K562 (cell line): ENCODE measurements at regions of chr10 and their contacts with region 1.

Region 1: GRCh38 chr10:125054669-125055268 is 105.6 kb downstream of the CTBP2 start:
- DNase-seq: peak in 3 of 4 experiments; percentile 0 to 1 (median 0)
- ATAC-seq: no peak
- H3K4me3 ChIP-seq: no peak overlapping the region
- H3K27ac ChIP-seq: no peak overlapping the region
- H3K4me1 ChIP-seq: peaks cover 30 to 35% of the 10 kb centered on the region in 2 experiments
- H3K27me3 ChIP-seq: no peaks in the 10 kb centered on the region
- CTCF ChIP-seq: no peak
- EP300 ChIP-seq: no peak
- POLR2A ChIP-seq: no peak
- RAD21 ChIP-seq: no peak

Region 2: GRCh38 chr10:125144693-125145623 is 90.2 kb after region 1 on chr10:
- CTCF ChIA-PET with region 1: no interaction called
- POLR2A ChIA-PET with region 1: no interaction called
- in situ Hi-C with region 1: no loop called
- intact Hi-C with region 1: loop called (anchors 5 kb)
- DNase-seq: peak; percentile 65 to 79 (median 75)
- ATAC-seq: peak; percentile 85
- H3K4me3 ChIP-seq: peak overlapping the region; percentile 2; the same call in 1 of the 2 replicates
- H3K27ac ChIP-seq: peak overlapping the region; percentile 49
- H3K4me1 ChIP-seq: peaks cover 51 to 59% of the 10 kb centered on the region in 2 experiments
- H3K27me3 ChIP-seq: no peaks in the 10 kb centered on the region
- CTCF ChIP-seq: peak; percentile 61 to 67 (median 63)
- EP300 ChIP-seq: peak; percentile 22; the same call in 1 of the 2 replicates
- POLR2A ChIP-seq: no peak
- RAD21 ChIP-seq: peak; percentile 22 to 44; a peak in 2 of 4 replicates

Region 3: GRCh38 chr10:126583552-126584200 is 1528.9 kb after region 1 on chr10:
- CTCF ChIA-PET with region 1: no interaction called
- POLR2A ChIA-PET with region 1: no interaction called
- in situ Hi-C with region 1: no loop called
- intact Hi-C with region 1: no loop called
- DNase-seq: no peak
- ATAC-seq: no peak
- H3K4me3 ChIP-seq: no peak overlapping the region
- H3K27ac ChIP-seq: no peak overlapping the region
- H3K4me1 ChIP-seq: no peaks in the 10 kb centered on the region
- H3K27me3 ChIP-seq: no peaks in the 10 kb centered on the region
- CTCF ChIP-seq: no peak
- EP300 ChIP-seq: no peak
- POLR2A ChIP-seq: no peak
- RAD21 ChIP-seq: no peak